Lower leg skin (tissue), 4 donors: ENCODE measurements at regions of chr17 and their contacts with region 1.

Region 1: DNA sequence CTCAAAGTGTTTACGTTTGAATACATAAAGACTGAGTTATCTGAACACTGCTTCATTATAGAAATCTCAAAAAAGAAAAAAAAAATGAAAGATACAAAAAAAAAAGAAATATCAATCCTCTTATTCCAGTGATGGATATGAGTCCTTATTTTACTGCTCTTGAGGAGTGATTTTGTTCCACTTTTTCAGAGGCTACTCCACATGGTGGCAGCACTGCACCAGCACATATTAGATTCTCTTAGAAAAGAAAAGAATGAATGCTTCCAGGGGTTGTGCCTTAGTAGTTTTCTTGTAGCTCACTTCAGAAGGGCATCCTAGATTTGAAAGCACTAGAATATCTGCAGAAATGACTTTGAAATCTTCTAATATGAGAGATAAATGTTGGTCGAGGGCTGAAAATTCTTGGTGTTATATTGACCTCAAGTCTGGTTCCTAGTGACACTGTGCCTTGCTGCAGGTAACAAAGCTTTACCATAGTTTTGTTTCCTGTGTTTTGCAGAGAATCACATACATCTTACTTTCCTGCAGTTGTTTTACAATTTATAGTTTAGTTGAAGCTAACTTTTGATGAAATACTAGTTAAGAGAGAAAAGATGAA is 25.9 kb downstream of the AP2B1 start:
- DNase-seq: peak in 1 of 2 donors; percentile 19
- H3K4me3 ChIP-seq: no peak overlapping the region
- CTCF ChIP-seq: no peak
- POLR2A ChIP-seq: no peak

Region 2: DNA sequence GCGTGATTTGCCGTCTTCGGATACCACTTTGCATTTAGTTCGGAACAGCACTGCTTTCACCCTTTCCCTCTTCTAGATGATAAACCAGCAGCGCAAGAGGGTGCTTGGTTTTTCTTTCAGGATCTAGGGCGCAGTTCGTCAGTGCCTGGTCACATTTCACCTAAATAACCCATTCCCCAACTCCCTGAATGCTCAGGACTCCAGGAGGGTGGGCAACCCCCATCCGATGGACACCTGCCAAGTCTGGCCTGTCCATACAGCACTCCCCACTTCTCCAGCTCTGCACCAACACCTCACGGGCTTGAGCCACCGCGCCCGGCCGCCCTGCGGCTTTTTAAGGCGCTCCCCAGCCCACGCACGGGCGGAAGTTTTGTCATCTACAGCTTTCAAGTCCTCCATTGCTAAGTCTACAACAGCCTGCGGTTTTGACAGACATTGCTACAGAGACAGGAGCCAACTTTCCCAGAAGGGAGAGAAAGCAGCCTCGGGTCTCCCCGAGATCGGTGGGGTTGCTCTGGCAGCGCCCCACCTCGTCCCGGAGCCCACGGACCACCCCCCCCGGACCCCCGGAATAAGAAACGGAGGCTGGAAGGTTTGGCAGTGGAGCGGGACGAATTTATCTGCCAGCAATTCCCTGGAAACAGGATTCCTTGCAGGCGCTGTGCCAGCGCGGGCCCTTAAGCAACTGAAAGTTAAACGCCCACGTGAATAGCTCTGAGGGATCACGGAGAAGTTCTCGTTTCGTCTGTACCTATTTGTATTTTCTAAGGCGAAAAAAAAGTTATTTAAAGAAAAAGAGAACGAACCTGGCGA is 125.9 kb before region 1 on chr17:
- intact Hi-C with region 1: no loop called
- DNase-seq: peak; percentile 26 to 91
- H3K4me3 ChIP-seq: peak overlapping the region; percentile 19
- CTCF ChIP-seq: no peak
- POLR2A ChIP-seq: no peak

Region 3: DNA sequence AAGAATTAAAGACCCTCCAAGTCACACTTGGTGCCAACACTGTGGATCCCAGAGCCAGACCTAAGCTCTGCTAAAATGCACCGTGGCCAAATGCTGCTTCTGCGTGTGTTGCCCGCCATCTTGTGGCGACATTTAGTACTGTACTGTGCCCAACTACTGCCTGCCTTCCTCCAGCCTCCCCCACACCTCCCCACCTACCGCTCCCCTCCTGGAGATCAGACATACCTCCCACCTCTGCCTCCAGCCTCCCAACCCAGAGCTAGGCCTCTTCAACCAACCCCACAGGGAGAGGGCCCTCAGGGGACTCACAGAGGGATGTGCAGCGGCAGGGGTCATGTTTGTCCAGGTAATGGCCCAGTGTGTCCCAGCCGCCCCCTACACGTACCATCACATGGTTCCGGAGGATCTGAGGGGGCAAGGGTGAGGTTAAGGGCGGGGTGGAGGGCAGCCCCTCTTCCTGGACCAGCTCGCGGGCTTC is 134.6 kb after region 1 on chr17:
- intact Hi-C with region 1: loop called (anchors 5 kb)
- DNase-seq: peak; percentile 69 to 94
- H3K4me3 ChIP-seq: no peak overlapping the region
- CTCF ChIP-seq: peak in 1 of 3 donors; percentile 73
- POLR2A ChIP-seq: no peak